Esophagus muscularis mucosa (tissue), 4 donors: ENCODE measurements at regions of chr12 and their contacts with region 1.

Region 1: GRCh38 chr12:95117178-95117599 is 43.8 kb upstream of the NR2C1 start:
- DNase-seq: no peak
- H3K4me3 ChIP-seq: no peak overlapping the region
- H3K27ac ChIP-seq: peak overlapping the region; percentile 56 to 74 (median 68)
- H3K4me1 ChIP-seq: peaks cover 26 to 42% (median 40%) of the 10 kb centered on the region in 4 donors
- H3K27me3 ChIP-seq: no peaks in the 10 kb centered on the region
- CTCF ChIP-seq: peak; percentile 70 to 80 (median 80)
- EP300 ChIP-seq: no peak
- POLR2A ChIP-seq: no peak

Region 2: GRCh38 chr12:95051241-95051640 is 65.9 kb before region 1 on chr12:
- intact Hi-C with region 1: no loop called
- DNase-seq: no peak
- H3K4me3 ChIP-seq: no peak overlapping the region
- H3K27ac ChIP-seq: no peak overlapping the region
- H3K4me1 ChIP-seq: peaks cover 0 to 18% (median 14%) of the 10 kb centered on the region in 4 donors
- H3K27me3 ChIP-seq: no peaks in the 10 kb centered on the region
- CTCF ChIP-seq: no peak
- EP300 ChIP-seq: no peak
- POLR2A ChIP-seq: no peak

Region 3: GRCh38 chr12:95072900-95073697 is 44.1 kb before region 1 on chr12 and contains the start of gene NR2C1:
- intact Hi-C with region 1: loop called (anchors 2 kb)
- DNase-seq: peak; percentile 96
- H3K4me3 ChIP-seq: peak within 1 kb of the TSS; percentile 76 to 96 (median 92)
- H3K27ac ChIP-seq: peak within 1 kb of the TSS; percentile 91 to 97 (median 94)
- H3K4me1 ChIP-seq: peaks cover 11 to 63% (median 42%) of the 10 kb centered on the region in 4 donors
- H3K27me3 ChIP-seq: no peaks in the 10 kb centered on the region
- CTCF ChIP-seq: no peak
- EP300 ChIP-seq: no peak
- POLR2A ChIP-seq: no peak
- total RNA-seq, gene NR2C1: 31.5 to 57.3 (median 40.4) TPM

Region 4: DNA sequence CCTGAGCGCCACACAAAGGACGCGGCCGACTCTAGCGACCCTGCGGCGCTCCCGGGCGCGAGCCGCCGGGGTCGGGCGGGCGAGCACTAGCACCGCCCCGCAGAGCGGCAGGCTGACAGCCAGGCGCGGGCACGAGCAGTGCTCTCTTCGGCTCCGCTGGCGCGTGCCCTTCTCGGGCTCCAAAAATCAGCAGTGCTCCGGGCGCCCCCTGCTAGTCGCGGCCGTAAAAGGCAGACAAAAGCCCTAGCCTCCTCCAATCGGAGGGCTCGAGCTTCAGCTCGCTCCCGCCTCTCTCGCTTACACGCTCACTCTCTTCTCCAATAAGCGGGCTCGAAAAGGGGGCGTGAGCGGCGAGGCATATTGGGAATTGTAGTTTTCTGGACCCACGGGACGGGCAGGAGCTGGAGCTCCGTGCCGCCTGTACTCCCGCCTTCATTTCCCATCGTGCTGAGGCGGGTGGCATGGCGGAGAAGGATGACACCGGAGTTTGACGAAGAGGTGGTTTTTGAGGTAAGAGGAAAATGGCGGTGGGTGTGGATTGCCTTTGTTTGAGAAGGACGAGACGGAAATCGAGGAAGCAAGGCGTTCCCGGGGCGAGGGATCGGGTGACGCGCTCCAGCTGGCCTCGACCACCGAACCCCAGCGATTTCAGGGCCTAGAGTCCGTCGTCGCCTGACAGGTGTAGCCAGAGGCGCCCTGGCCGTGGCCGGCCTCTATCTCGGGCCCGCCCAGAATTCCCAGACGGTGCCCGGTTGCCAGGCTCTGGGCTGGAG is 100.4 kb after region 1 on chr12 and contains the starts of genes FGD6 and VEZT:
- intact Hi-C with region 1: loop called (anchors 5 kb)
- DNase-seq: peak; percentile 100
- H3K4me3 ChIP-seq: peak within 1 kb of the TSS; percentile 73 to 89 (median 86)
- H3K27ac ChIP-seq: peak within 1 kb of the TSS; percentile 92 to 99 (median 98)
- H3K4me1 ChIP-seq: peaks cover 28 to 59% (median 57%) of the 10 kb centered on the region in 4 donors
- H3K27me3 ChIP-seq: no peaks in the 10 kb centered on the region
- CTCF ChIP-seq: peak; percentile 42 to 61 (median 53)
- EP300 ChIP-seq: no peak
- POLR2A ChIP-seq: peak; percentile 64
- total RNA-seq, gene FGD6: 30.5 to 48.6 (median 37.3) TPM
- total RNA-seq, gene VEZT: 73.0 to 90.3 (median 87.0) TPM

Region 5: DNA sequence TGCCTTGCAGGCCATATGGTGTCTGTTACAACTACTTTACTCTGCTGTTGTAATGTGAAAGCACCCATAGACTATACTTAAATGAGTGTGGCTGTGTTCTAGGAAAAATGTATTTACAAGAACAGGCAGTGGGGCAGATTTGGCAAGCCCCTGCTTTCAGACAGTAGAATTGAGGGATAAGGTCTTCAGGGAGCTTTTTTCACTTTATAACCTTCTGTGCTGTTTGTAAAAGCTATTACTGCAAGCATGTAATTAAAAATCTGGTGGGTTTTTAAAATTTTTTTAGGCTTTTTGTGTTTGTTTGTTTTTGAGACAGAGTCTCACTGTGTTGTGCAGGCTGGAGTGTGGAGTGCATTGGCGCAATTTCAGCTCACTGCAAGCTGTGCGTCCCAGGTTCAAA is 174.3 kb after region 1 on chr12:
- intact Hi-C with region 1: no loop called
- DNase-seq: no peak
- H3K4me3 ChIP-seq: no peak overlapping the region
- H3K27ac ChIP-seq: no peak overlapping the region
- H3K4me1 ChIP-seq: peaks cover 0 to 5% (median 0%) of the 10 kb centered on the region in 4 donors
- H3K27me3 ChIP-seq: no peaks in the 10 kb centered on the region
- CTCF ChIP-seq: no peak
- EP300 ChIP-seq: no peak
- POLR2A ChIP-seq: no peak

Region 6: DNA sequence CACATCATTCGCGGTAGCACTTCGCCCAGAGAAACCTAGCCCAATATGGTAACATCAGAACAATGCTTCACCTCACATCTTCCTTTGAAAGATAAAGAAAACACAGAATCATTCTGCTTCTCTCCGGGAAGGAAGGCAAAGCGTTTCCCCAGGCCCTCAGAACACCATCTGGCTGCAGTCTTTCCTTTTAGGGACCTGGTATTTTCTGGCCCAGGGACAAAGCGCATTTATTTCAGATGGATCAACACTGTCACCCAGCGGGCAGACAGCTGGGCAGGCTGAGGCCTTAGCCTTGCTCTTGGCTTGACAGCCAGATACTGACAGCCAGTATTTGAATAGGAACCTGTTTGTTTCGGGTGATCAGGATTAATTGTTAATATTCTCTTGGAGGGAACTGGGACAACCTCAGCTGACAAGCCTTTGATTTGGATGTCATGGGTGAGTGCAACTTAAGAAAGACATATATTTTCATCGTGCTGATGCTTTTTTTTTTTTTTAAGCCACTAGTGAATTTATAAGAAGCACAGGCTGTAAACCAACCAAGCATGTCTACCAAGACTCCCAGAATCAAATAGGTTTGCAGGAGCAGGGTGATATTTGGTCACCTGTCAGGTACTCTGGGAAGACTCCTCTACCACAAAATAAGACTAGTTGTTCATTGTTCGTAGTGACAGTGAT is 219.3 kb after region 1 on chr12:
- intact Hi-C with region 1: loop called (anchors 2 kb)
- DNase-seq: no peak
- H3K4me3 ChIP-seq: peak overlapping the region; percentile 4 to 40 (median 30)
- H3K27ac ChIP-seq: peak overlapping the region; percentile 81 to 86 (median 83)
- H3K4me1 ChIP-seq: peaks cover 10 to 44% (median 39%) of the 10 kb centered on the region in 4 donors
- H3K27me3 ChIP-seq: no peaks in the 10 kb centered on the region
- CTCF ChIP-seq: peak; percentile 64 to 74 (median 68)
- EP300 ChIP-seq: no peak
- POLR2A ChIP-seq: no peak

Region 7: GRCh38 chr12:95532851-95533250 is 415.7 kb after region 1 on chr12:
- intact Hi-C with region 1: loop called (anchors 2 kb)
- DNase-seq: no peak
- H3K4me3 ChIP-seq: no peak overlapping the region
- H3K27ac ChIP-seq: no peak overlapping the region
- H3K4me1 ChIP-seq: peaks cover 0 to 13% (median 11%) of the 10 kb centered on the region in 4 donors
- H3K27me3 ChIP-seq: no peaks in the 10 kb centered on the region
- CTCF ChIP-seq: no peak
- EP300 ChIP-seq: no peak
- POLR2A ChIP-seq: no peak